Dorsolateral prefrontal cortex (tissue), 120 donors: ENCODE measurements at regions of chr9 and their contacts with region 1.

Region 1: DNA sequence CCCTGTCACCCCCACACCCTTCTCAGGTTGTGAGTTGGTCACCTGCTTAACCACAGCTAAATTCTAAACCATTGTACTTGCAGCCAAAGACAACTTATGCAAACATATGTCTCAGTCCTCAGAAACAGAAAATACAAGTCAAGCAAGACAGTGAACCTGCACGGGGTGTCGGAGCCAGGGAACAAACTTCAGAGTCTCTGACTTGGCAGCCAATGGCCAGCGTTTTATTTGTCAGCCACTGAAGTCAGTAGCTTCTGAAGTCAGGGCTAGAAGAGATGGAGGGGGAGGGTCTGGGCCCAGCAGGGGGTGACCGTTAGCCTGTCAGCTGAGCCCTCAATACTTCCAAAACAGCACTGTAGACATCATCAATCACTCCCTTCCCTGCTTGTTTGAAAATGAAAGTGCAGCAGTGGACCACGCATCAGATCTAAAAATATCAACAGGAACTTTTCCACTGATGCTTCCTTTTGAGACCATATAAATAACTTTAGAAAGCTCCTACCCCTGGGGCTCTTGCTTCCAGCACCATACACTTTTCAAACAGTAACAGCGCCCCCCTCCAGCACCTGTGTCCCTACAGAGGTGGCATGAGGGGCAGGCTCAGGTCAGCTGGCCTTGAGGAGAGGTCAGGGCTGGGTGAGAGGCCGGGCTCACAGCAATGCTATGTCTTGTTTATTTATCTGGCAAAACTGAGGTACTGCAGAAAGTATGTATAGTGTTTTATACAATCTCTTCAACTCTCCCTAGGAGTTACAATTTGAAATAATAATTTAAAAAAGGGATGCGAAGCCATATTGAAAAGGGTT is 142.5 kb downstream of the ACER2 start:
- DNase-seq: peak in 1 of 10 donors; percentile 27
- H3K4me3 ChIP-seq: peak overlapping the region in 31 of 59 donors; percentile 1 to 47 (median 22)
- H3K27ac ChIP-seq: peak overlapping the region in 57 of 59 donors; percentile 0 to 91 (median 73)
- H3K27me3 ChIP-seq: no peaks in the 10 kb centered on the region
- CTCF ChIP-seq: peak in 13 of 56 donors; percentile 1 to 30 (median 20)

Region 2: GRCh38 chr9:19513671-19514275 is 37.6 kb before region 1 on chr9:
- intact Hi-C with region 1: loop called in 1 of 2 experiments (anchors 5 kb)
- DNase-seq: no peak
- H3K4me3 ChIP-seq: no peak overlapping the region
- H3K27ac ChIP-seq: peak overlapping the region in 53 of 59 donors; percentile 7 to 91 (median 79)
- H3K27me3 ChIP-seq: no peaks in the 10 kb centered on the region
- CTCF ChIP-seq: no peak

Region 3: GRCh38 chr9:19583890-19584289 is 32.6 kb after region 1 on chr9:
- intact Hi-C with region 1: loop called in 1 of 2 experiments (anchors 5 kb)
- DNase-seq: no peak
- H3K4me3 ChIP-seq: no peak overlapping the region
- H3K27ac ChIP-seq: peak overlapping the region in 56 of 59 donors; percentile 16 to 91 (median 82)
- H3K27me3 ChIP-seq: no peaks in the 10 kb centered on the region
- CTCF ChIP-seq: no peak

Region 4: GRCh38 chr9:19598722-19599121 is 47.4 kb after region 1 on chr9:
- intact Hi-C with region 1: loop called in 1 of 2 experiments (anchors 5 kb)
- DNase-seq: no peak
- H3K4me3 ChIP-seq: no peak overlapping the region
- H3K27ac ChIP-seq: peak overlapping the region in 43 of 59 donors; percentile 14 to 91 (median 75)
- H3K27me3 ChIP-seq: no peaks in the 10 kb centered on the region
- CTCF ChIP-seq: no peak

Region 5: DNA sequence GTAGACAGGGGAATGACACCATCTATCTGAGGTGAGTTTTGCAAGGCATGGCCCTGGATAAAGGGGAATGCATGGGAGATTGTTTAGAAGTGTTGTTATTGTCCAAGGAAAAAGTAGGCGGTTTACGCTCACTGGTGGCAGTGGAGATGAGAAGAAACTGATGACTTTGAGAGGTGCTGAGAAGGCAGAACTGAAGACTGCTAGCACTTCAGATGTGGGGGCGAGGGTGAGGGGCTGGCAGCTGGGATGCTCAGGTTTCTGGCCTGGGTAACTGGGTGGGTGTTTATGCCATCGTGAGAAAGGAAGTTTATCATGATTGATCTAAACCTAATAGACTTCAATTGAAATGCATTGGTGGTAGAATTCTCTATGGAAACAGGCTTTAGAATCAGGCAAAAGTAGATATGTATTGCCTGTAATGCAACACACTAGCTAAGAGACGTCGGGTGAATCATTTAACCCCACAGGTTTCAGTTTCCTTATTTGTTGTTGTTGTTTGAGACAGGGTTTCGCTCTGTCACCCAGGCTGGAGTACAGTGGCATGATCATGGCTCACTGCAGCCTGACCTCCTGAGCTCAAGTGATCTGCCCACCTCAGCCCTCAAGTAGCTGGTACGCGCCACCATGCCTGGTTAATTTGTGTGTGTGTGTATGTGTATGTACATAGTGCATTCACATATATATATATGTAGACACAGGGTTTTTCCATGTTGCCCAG is 114.0 kb after region 1 on chr9:
- intact Hi-C with region 1: no loop called
- DNase-seq: no peak
- H3K4me3 ChIP-seq: no peak overlapping the region
- H3K27ac ChIP-seq: peak overlapping the region in 50 of 59 donors; percentile 7 to 92 (median 66)
- H3K27me3 ChIP-seq: no peaks in the 10 kb centered on the region
- CTCF ChIP-seq: no peak